GM12878 (cell line): ENCODE measurements at regions of chr5 and their contacts with region 1.

Region 1: GRCh38 chr5:54774281-54775170 is 210.9 kb downstream of the ESM1 start:
- DNase-seq: no peak
- ATAC-seq: no peak
- H3K4me3 ChIP-seq: no peak overlapping the region
- H3K27ac ChIP-seq: no peak overlapping the region
- H3K4me1 ChIP-seq: peaks cover 5% of the 10 kb centered on the region; the same call in 1 of the 2 replicates
- H3K27me3 ChIP-seq: no peaks in the 10 kb centered on the region; a peak in 1 of 4 replicates
- CTCF ChIP-seq: no peak
- EP300 ChIP-seq: no peak
- POLR2A ChIP-seq: no peak
- RAD21 ChIP-seq: no peak

Region 2: GRCh38 chr5:54570916-54571315 is 203.6 kb before region 1 on chr5:
- CTCF ChIA-PET with region 1: no interaction called
- POLR2A ChIA-PET with region 1: no interaction called
- RAD21 ChIA-PET with region 1: no interaction called
- SMC1A ChIA-PET with region 1: no interaction called
- in situ Hi-C with region 1: no loop called
- intact Hi-C with region 1: loop called (anchors 5 kb)
- DNase-seq: no peak
- ATAC-seq: no peak
- H3K4me3 ChIP-seq: no peak overlapping the region
- H3K27ac ChIP-seq: no peak overlapping the region
- H3K4me1 ChIP-seq: no peaks in the 10 kb centered on the region
- H3K27me3 ChIP-seq: no peaks in the 10 kb centered on the region
- CTCF ChIP-seq: no peak
- EP300 ChIP-seq: no peak
- POLR2A ChIP-seq: no peak
- RAD21 ChIP-seq: no peak